Aorta (tissue), 5 donors: ENCODE measurements at regions of chr7 and their contacts with region 1.

Region 1: GRCh38 chr7:45136106-45137060 is 21.2 kb upstream of the RAMP3 start:
- DNase-seq: peak in 1 of 2 donors; percentile 40
- ATAC-seq: peak; percentile 75
- H3K4me3 ChIP-seq: no peak overlapping the region
- H3K27ac ChIP-seq: no peak overlapping the region
- H3K4me1 ChIP-seq: no peaks in the 10 kb centered on the region
- H3K27me3 ChIP-seq: no peaks in the 10 kb centered on the region

Region 2: GRCh38 chr7:44581879-44582603 is 554.3 kb before region 1 on chr7 and contains the start of gene TMED4:
- intact Hi-C with region 1: loop called (anchors 5 to 10 kb)
- DNase-seq: peak; percentile 100
- ATAC-seq: peak; percentile 100
- H3K4me3 ChIP-seq: peak within 1 kb of the TSS; percentile 39 to 56
- H3K27ac ChIP-seq: peak within 1 kb of the TSS; percentile 16 to 83
- H3K4me1 ChIP-seq: no peaks in the 10 kb centered on the region
- H3K27me3 ChIP-seq: no peaks in the 10 kb centered on the region
- total RNA-seq, gene TMED4: 62.2 to 66.8 TPM

Region 3: GRCh38 chr7:44587843-44588711 is 548.3 kb before region 1 on chr7:
- intact Hi-C with region 1: loop called (anchors 5 to 10 kb)
- DNase-seq: no peak
- ATAC-seq: peak; percentile 57
- H3K4me3 ChIP-seq: no peak overlapping the region
- H3K27ac ChIP-seq: no peak overlapping the region
- H3K4me1 ChIP-seq: no peaks in the 10 kb centered on the region
- H3K27me3 ChIP-seq: no peaks in the 10 kb centered on the region

Region 4: DNA sequence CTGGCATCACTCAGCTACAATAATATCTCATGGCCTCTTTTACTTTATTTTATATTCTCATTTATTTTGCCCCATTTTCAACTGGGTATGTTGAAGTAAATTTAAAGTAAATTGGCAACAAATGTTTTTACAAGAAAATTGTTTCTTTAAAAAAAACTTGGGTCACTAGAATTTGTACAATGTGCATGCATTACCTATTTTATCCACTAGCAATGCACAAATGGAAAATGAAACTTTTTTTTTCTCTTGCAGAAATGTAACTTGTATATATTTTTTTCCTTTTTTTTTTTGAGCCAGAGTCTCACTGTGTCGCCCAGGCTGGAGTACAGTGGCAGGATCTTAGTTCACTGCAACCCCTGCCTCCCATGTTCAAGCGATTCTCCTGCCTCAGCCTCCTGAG is 278.2 kb before region 1 on chr7:
- intact Hi-C with region 1: loop called (anchors 5 kb)
- DNase-seq: no peak
- ATAC-seq: no peak
- H3K4me3 ChIP-seq: no peak overlapping the region
- H3K27ac ChIP-seq: no peak overlapping the region
- H3K4me1 ChIP-seq: no peaks in the 10 kb centered on the region
- H3K27me3 ChIP-seq: no peaks in the 10 kb centered on the region

Region 5: DNA sequence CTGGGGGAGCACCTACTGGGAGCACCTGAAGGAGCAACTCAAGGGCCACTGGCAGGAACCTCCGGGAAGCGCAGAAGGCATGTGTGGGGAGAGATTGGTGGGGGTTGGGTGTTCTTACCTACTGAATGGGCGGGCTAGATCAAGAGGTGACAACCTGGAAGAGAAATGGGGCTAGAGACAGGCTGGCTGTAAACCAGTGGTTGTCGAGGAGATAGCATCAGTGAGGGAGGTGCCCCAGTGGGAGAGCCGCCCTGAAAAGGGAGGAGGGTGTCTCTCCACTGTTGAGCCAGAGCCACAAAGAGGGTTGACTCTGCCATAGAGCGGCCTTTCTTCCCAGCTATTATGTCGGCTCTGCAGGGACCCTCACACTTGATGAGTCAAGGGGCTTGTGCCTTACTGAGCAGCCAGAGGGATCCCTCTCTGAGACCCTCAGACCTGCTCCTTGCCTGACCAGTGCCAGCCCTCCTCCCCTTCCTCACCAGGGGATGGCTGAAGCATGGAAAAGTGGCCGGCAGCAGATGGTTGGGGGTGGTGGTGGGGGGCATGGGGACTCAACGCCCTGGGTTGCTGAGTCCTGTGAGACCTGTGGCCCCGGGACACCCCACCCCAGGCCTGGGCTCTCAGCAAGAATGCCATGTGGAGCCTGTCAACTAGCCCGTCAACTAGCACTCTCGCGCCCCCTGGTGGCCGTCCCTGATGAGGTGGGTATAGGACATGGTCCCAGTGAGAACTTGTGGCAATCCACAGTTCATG is 214.6 kb before region 1 on chr7:
- intact Hi-C with region 1: loop called in 1 of 2 experiments (anchors 5 kb)
- DNase-seq: peak; percentile 95 to 98
- ATAC-seq: peak; percentile 92
- H3K4me3 ChIP-seq: no peak overlapping the region
- H3K27ac ChIP-seq: no peak overlapping the region
- H3K4me1 ChIP-seq: no peaks in the 10 kb centered on the region
- H3K27me3 ChIP-seq: no peaks in the 10 kb centered on the region

Region 6: GRCh38 chr7:44962483-44963251 is 173.7 kb before region 1 on chr7:
- intact Hi-C with region 1: loop called in 1 of 2 experiments (anchors 10 kb)
- DNase-seq: peak; percentile 61 to 83
- ATAC-seq: peak; percentile 38
- H3K4me3 ChIP-seq: peak overlapping the region in 1 of 2 donors; percentile 3
- H3K27ac ChIP-seq: no peak overlapping the region
- H3K4me1 ChIP-seq: no peaks in the 10 kb centered on the region
- H3K27me3 ChIP-seq: no peaks in the 10 kb centered on the region

Region 7: DNA sequence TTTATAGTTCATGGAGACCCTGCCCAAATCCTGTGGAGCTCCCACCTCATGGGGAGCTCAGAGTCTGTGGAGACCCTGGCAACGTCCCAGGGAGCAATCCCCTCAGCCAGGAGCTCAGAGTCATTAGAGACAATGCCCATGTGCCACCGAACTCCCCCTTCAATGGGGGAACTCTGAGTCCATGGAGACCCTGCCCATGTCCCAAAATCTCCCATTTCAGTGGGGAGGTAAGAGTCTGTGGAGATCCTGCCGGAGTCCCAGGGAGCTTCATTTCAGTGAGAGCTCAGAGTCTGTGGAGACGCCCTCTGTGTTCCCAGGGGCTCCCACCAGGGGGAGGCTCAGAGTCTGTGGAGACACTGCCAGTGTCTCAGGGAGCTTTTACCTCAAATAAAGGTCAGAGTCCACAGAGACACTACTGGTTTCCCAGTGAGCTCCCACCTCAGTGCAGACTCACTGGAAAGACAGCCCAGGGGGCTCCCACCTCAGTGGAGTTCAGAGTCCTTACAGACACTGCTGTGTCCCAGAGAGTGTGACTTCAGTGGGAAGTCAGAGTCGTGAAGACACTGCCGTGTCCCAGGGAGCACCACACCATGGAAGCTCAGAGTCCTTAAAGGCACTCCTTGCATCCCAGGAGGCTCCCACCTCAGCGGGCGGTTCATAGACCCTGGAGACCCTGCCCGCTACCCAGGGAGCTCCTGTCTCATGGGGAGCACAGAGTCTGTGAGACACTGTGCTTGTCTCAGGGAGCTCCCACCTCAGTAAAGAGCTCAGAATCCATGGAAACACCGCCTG is 162.6 kb before region 1 on chr7:
- intact Hi-C with region 1: loop called (anchors 5 to 10 kb)
- DNase-seq: peak; percentile 66 to 71
- ATAC-seq: no peak
- H3K4me3 ChIP-seq: no peak overlapping the region
- H3K27ac ChIP-seq: no peak overlapping the region
- H3K4me1 ChIP-seq: no peaks in the 10 kb centered on the region
- H3K27me3 ChIP-seq: no peaks in the 10 kb centered on the region